K562 (cell line): ENCODE measurements at regions of chr11 and their contacts with region 1.

Region 1: DNA sequence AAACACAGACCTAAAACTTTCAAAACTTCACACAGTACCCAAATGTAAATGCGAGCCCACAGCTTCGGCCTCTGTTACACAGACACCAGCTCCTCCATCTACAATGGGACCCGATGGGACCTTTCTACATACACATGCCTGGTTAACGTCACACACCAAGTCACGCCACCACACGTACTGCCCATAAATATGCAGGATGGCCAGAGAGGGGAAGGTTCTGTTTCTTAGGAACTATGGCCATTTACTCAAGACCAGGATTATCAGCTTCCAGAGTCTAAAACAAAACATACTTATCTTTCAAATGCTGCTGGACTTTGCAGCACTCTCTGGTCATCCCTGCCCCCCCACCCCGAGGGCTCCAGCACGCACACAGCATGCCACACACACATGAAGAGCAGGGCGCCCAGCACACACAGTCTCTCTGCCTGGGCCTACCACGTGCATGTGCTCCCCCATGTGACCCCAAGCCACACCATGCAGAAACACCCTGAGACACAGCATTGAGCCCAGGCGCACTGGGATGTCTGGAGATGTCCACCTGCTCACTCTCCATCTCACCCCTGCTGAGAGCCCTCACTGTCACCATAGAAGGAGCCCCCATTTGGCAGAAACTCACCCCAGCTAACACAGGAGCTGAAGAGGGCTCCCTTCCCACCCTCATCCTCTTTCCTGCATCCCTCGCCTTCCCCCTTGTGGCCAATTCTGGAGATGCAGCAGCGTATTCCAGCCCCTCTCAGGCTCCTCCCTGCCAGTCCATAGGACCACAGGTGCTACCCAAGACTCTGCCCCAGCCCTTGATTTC is 61.8 kb downstream of the SLC22A12 start:
- DNase-seq: peak; percentile 84 to 88 (median 86)
- ATAC-seq: peak; percentile 89
- H3K4me3 ChIP-seq: no peak overlapping the region
- H3K27ac ChIP-seq: no peak overlapping the region
- H3K4me1 ChIP-seq: peaks cover 23 to 27% of the 10 kb centered on the region in 2 experiments
- H3K27me3 ChIP-seq: peaks cover 0 to 18% of the 10 kb centered on the region in 2 experiments; a peak in 3 of 5 replicates
- CTCF ChIP-seq: peak; percentile 91 to 97 (median 94)
- EP300 ChIP-seq: no peak
- POLR2A ChIP-seq: no peak; the same call in 1 of the 2 replicates
- RAD21 ChIP-seq: peak; percentile 79 to 90

Region 2: GRCh38 chr11:64448599-64449556 is 203.9 kb before region 1 on chr11:
- CTCF ChIA-PET with region 1: interaction called, 4 read pairs
- POLR2A ChIA-PET with region 1: no interaction called
- in situ Hi-C with region 1: no loop called
- intact Hi-C with region 1: loop called (anchors 2 kb)
- DNase-seq: peak; percentile 85 to 89 (median 88)
- ATAC-seq: peak; percentile 98
- H3K4me3 ChIP-seq: peak overlapping the region; percentile 8; the same call in 1 of the 2 replicates
- H3K27ac ChIP-seq: no peak overlapping the region
- H3K4me1 ChIP-seq: peaks cover 11 to 17% of the 10 kb centered on the region in 2 experiments
- H3K27me3 ChIP-seq: peaks cover 5 to 44% of the 10 kb centered on the region in 2 experiments; a peak in 4 of 5 replicates
- CTCF ChIP-seq: peak; percentile 87 to 93 (median 91)
- EP300 ChIP-seq: no peak
- POLR2A ChIP-seq: no peak
- RAD21 ChIP-seq: peak; percentile 62 to 83; a peak in 3 of 4 replicates

Region 3: DNA sequence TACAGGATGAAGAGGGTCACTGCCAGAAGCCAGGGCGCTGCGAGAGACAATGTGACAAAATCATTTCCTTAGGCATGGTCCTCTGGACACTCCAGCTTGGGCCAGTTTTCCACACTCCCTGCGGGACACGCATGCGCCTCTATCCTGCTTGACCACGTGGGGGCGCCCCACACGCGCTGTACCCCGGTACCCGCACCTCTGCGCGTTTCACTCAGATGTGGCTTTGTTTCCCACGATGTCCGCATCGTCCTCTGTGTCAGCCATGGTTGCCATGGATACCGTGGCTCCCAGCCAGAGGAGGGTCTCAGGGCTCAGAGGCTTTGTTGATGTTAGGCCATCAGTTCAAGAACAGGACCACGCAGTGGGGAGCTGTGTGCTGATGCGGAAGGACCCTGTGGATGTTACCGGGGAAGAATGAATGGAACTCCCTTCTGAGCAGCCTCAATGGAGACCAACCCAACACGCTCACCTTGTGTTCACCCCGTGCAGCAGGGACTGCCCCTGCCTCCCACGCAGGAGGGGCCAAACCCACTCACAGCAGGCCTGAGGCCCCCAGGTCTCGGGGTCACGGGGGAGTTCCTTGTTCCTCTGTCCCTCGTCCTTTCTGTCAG is 162.9 kb before region 1 on chr11:
- CTCF ChIA-PET with region 1: interaction called, 7 read pairs
- POLR2A ChIA-PET with region 1: no interaction called
- in situ Hi-C with region 1: no loop called
- intact Hi-C with region 1: loop called (anchors 1 kb)
- DNase-seq: peak; percentile 77 to 80 (median 78)
- ATAC-seq: peak; percentile 99
- H3K4me3 ChIP-seq: no peak overlapping the region
- H3K27ac ChIP-seq: no peak overlapping the region
- H3K4me1 ChIP-seq: peaks cover 0 to 13% of the 10 kb centered on the region in 2 experiments; a peak in 3 of 5 replicates
- H3K27me3 ChIP-seq: peaks cover 15 to 44% of the 10 kb centered on the region in 2 experiments; a peak in 4 of 5 replicates
- CTCF ChIP-seq: peak; percentile 88 to 97 (median 94)
- EP300 ChIP-seq: no peak
- POLR2A ChIP-seq: no peak
- RAD21 ChIP-seq: peak; percentile 76 to 95

Region 4: GRCh38 chr11:64553551-64554201 is 99.1 kb before region 1 on chr11:
- CTCF ChIA-PET with region 1: no interaction called
- POLR2A ChIA-PET with region 1: interaction called, 5 read pairs
- in situ Hi-C with region 1: no loop called
- intact Hi-C with region 1: loop called (anchors 1 kb)
- DNase-seq: peak; percentile 65 to 80 (median 74)
- ATAC-seq: peak; percentile 80
- H3K4me3 ChIP-seq: no peak overlapping the region
- H3K27ac ChIP-seq: no peak overlapping the region
- H3K4me1 ChIP-seq: peaks cover 9 to 17% of the 10 kb centered on the region in 2 experiments; a peak in 4 of 5 replicates
- H3K27me3 ChIP-seq: peaks cover 7 to 14% of the 10 kb centered on the region in 2 experiments; a peak in 3 of 5 replicates
- CTCF ChIP-seq: peak; percentile 89 to 94 (median 89)
- EP300 ChIP-seq: no peak
- POLR2A ChIP-seq: no peak
- RAD21 ChIP-seq: peak; percentile 87 to 93

Region 5: DNA sequence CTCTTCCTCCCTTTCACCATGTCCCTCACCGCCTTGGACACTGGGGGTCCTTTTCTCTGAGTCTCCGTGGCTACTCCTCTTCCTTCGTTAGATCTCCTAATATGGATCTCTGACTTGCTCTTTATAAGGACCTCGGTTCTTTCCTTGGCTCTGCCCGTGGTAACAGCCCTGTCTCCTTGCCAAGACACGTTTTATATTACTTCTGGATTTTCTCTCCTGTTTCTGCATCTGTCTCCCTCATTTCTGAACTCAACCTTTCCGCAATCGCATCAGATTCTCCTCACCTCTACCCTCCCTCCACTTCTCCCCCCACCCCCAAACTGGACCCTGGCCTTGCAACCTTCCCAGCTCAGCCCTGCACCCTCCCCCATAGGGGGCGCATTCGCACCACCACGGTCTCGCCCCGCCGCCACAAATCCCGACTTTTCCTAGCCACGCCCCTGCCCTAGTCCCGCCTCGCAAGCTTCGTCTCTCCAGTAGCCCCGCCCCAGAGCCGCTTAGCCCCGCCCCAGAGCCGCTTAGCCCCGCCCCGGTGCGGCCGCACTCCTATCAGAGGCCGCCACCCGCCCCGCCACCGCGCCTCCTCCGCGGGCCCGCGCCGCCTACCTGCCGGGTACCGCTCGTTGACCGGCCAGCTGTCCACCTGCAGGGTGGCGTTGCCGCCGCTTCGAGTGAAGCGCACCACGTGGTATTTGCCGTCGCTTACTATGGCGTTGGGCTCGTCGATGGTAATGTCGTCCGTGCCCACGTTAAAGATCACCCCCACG is 22.8 kb before region 1 on chr11:
- CTCF ChIA-PET with region 1: no interaction called
- POLR2A ChIA-PET with region 1: interaction called, 6 read pairs
- in situ Hi-C with region 1: no loop called
- intact Hi-C with region 1: loop called (anchors 2 kb)
- DNase-seq: peak; percentile 92 to 98 (median 96)
- ATAC-seq: peak; percentile 100
- H3K4me3 ChIP-seq: no peak overlapping the region; the same call in 1 of the 2 replicates
- H3K27ac ChIP-seq: no peak overlapping the region
- H3K4me1 ChIP-seq: peaks cover 6 to 12% of the 10 kb centered on the region in 2 experiments; a peak in 4 of 5 replicates
- H3K27me3 ChIP-seq: peaks cover 11 to 57% of the 10 kb centered on the region in 2 experiments
- CTCF ChIP-seq: peak; percentile 60 to 70 (median 62); a peak in 5 of 6 replicates
- EP300 ChIP-seq: no peak; the same call in 1 of the 2 replicates
- POLR2A ChIP-seq: no peak
- RAD21 ChIP-seq: peak in 1 of 2 experiments; percentile 41; a peak in 1 of 4 replicates

Region 6: DNA sequence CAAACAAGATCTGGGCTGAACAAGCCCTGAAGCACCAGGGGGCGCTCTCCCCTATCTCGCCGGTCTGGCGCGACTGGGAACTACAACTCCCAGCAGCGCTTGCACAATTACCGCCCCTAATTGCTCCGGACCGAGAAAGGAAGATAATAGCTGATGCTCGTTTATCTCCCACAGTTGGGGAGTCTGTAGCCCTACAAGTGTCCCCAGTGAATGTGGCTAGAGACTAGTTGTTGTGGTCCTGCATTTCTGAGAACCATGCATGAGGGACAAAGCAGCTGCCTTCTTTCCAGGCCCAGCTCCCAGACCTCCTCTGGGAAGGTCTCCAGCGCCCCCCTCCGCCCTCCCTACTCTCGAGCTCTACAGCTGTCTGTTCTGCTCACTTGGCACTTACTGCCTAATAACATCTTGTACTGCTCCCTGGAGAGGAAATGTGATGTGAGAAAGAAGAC is 35.8 kb after region 1 on chr11:
- CTCF ChIA-PET with region 1: interaction called, 3 read pairs
- POLR2A ChIA-PET with region 1: interaction called, 3 read pairs
- in situ Hi-C with region 1: no loop called
- intact Hi-C with region 1: loop called (anchors 2 kb)
- DNase-seq: peak; percentile 88 to 94 (median 91)
- ATAC-seq: peak; percentile 99
- H3K4me3 ChIP-seq: peak overlapping the region; percentile 35
- H3K27ac ChIP-seq: no peak overlapping the region
- H3K4me1 ChIP-seq: peaks cover 0 to 6% of the 10 kb centered on the region in 2 experiments; a peak in 2 of 5 replicates
- H3K27me3 ChIP-seq: peaks cover 21 to 62% of the 10 kb centered on the region in 2 experiments
- CTCF ChIP-seq: peak; percentile 94 to 97 (median 97)
- EP300 ChIP-seq: peak; percentile 39; the same call in 1 of the 2 replicates
- POLR2A ChIP-seq: no peak
- RAD21 ChIP-seq: peak; percentile 81 to 82

Region 7: GRCh38 chr11:64723117-64723906 is 70.5 kb after region 1 on chr11 and contains the start of gene NRXN2:
- CTCF ChIA-PET with region 1: interaction called, 3 read pairs
- POLR2A ChIA-PET with region 1: no interaction called
- in situ Hi-C with region 1: no loop called
- intact Hi-C with region 1: loop called (anchors 10 kb)
- DNase-seq: peak; percentile 90 to 95 (median 94)
- ATAC-seq: peak; percentile 99
- H3K4me3 ChIP-seq: peak within 1 kb of the TSS; percentile 68
- H3K27ac ChIP-seq: no peak within 1 kb of the TSS
- H3K4me1 ChIP-seq: peaks cover 0 to 25% of the 10 kb centered on the region in 2 experiments; a peak in 3 of 5 replicates
- H3K27me3 ChIP-seq: peaks cover 7 to 27% of the 10 kb centered on the region in 2 experiments; a peak in 4 of 5 replicates
- CTCF ChIP-seq: peak; percentile 85 to 89 (median 88)
- EP300 ChIP-seq: no peak
- POLR2A ChIP-seq: no peak
- RAD21 ChIP-seq: peak; percentile 83 to 86
- polyA plus RNA-seq, gene NRXN2: not detected

Region 8: DNA sequence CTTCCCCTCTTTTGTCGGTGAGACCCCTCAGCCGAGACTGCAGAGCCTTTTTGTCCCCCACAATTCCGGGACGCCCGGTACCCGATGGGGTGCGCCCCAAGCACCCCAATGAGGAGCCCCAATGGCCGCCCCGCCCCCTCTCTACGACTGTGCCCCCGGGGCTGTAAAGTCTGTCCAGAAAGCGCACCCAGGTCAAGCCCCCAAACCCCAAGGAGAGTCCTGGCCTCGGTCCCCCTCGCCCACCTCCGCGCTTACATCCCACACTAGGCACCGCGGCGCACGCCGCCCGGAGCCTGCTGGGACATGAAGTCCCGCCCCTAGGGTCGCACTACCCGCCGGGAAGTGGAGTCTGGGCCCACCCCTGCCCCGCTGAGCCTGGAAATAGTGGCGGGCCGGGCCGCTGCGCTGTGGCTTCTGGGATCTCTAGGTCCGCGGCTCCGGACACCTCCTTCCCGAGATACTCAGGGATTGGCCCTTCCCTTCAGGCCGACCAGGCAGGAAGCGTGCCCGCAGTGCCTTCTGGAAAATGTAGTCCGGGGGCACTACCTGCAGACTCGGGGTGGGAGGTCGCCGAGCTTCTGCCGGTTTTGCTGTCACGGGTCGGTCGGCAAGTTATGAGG is 157.6 kb after region 1 on chr11 and contains the start of gene MEN1:
- CTCF ChIA-PET with region 1: no interaction called
- POLR2A ChIA-PET with region 1: no interaction called
- in situ Hi-C with region 1: no loop called
- intact Hi-C with region 1: no loop called
- DNase-seq: peak; percentile 90 to 97 (median 94)
- ATAC-seq: peak; percentile 100
- H3K4me3 ChIP-seq: peak within 1 kb of the TSS; percentile 90
- H3K27ac ChIP-seq: peak within 1 kb of the TSS; percentile 43; the same call in 2 of the 3 replicates
- H3K4me1 ChIP-seq: peaks cover 5 to 24% of the 10 kb centered on the region in 2 experiments
- H3K27me3 ChIP-seq: no peaks in the 10 kb centered on the region
- CTCF ChIP-seq: no peak
- EP300 ChIP-seq: peak; percentile 6; the same call in 1 of the 2 replicates
- POLR2A ChIP-seq: peak; percentile 68
- RAD21 ChIP-seq: no peak
- polyA plus RNA-seq, gene MEN1: 3.4 to 3.9 TPM